Tibial artery (tissue), 4 donors: ENCODE measurements at regions of chr14 and their contacts with region 1.

Region 1: DNA sequence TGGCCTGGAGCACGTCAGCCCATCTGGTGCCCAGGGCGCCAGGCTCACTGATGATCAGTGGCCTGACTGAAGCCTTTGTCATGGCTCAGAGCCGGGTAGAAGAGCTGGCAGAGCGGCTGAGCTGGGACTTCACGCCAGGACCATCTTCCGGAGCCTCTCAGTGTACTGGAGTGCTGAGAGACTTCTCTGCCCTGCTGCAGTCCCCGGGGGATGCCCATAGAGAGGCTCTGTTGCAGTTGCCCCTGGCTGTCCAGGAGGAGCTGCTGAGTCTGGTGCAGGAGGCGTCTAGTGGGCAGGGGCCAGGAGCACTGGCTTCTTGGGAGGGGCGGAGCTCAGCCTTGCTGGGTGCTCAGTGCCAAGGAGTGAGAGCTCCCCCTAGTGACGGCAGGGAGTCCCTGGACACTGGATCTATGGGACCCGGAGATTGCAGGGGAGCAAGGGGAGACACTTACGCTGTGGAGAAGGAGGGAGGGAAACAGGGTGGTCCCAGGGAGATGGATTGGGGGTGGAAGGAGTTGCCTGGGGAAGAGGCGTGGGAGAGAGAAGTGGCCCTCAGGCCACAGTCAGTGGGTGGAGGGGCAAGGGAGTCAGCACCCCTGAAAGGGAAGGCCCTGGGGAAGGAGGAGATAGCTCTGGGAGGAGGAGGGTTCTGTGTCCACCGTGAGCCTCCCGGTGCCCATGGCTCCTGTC is 2.0 kb downstream of the KHNYN start:
- DNase-seq: peak; percentile 89 to 92
- H3K4me3 ChIP-seq: peak overlapping the region; percentile 64 to 81
- H3K27ac ChIP-seq: peak overlapping the region; percentile 94 to 96
- H3K4me1 ChIP-seq: peaks cover 0 to 42% (median 28%) of the 10 kb centered on the region in 4 donors
- H3K27me3 ChIP-seq: no peaks in the 10 kb centered on the region
- CTCF ChIP-seq: peak; percentile 72 to 86

Region 2: DNA sequence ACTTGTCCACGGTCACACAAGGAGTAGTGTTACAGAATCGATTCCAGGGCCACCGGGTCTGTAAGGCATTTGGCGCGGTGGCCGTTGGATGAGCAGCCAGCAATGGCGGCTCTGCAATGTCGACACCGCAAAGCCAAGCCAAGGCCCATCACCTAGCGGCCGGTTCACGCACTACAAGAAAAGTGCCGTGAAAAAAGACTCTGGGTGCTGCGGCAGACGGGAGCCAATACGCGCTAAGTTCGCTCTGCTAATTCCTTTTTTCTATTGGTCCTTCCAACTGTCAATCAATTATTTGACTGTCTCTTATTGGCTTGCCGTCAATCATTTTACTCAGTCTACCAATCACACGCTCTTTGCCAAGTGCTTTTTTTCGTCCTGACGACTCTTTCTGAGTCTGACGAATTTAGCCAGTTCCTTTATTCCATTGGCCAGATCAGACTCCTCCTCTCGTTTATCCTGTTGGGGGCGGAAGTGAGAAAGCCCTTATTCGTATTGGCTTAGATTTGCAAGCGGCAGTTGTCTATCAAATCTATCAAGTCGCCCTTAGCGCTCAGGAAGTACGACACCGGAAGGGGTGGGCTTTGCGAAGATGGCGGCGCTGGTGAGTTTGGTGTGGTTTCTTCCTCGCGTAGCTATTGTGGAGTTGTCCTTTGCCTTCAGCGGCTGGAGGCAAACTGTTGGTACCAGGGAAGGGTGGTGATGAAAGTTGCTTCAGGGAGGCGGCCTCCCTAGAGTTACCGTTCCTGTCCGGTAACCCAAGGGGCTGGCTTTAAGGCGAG is 962.4 kb before region 1 on chr14 and contains the start of gene NGDN:
- intact Hi-C with region 1: loop called (anchors 5 kb)
- DNase-seq: peak; percentile 96
- H3K4me3 ChIP-seq: peak within 1 kb of the TSS; percentile 76 to 79
- H3K27ac ChIP-seq: peak within 1 kb of the TSS; percentile 76 to 83
- H3K4me1 ChIP-seq: peaks cover 0 to 8% (median 4%) of the 10 kb centered on the region in 4 donors
- H3K27me3 ChIP-seq: no peaks in the 10 kb centered on the region
- CTCF ChIP-seq: peak; percentile 72 to 87

Region 3: DNA sequence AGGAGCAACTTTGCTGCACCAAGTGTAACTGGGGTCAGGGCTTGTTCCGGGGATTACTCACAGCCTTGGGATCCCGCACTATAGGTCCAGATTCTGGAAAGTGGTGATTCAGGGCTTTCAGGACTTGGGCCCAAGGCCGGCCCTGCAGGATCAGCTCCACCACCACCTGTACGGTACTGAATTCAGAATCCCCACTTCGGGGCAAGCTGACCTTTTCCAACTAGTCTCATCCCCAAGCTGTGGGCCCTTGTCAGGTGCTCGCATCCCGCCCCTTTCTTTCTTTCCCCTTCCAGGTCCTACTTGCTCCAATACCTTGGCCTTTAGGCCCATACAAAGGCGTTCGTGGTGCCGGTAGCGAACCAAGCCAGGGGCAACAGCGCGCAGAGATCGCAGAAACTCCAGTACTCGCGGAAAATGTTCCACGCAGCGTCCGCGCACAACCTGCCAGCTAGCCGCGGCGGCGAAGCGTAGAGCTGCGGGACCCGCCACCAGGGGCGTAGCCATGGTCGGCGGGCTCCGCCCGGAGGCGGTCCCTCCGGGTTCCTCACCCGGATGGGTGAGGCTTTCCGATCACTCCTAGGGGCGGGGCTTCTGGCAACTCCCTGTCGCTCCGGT is 189.8 kb before region 1 on chr14:
- intact Hi-C with region 1: loop called (anchors 10 kb)
- DNase-seq: peak; percentile 73 to 90
- H3K4me3 ChIP-seq: peak overlapping the region; percentile 68 to 90
- H3K27ac ChIP-seq: peak overlapping the region; percentile 92 to 93
- H3K4me1 ChIP-seq: peaks cover 0 to 45% (median 33%) of the 10 kb centered on the region in 4 donors
- H3K27me3 ChIP-seq: no peaks in the 10 kb centered on the region
- CTCF ChIP-seq: peak; percentile 54 to 66

Region 4: DNA sequence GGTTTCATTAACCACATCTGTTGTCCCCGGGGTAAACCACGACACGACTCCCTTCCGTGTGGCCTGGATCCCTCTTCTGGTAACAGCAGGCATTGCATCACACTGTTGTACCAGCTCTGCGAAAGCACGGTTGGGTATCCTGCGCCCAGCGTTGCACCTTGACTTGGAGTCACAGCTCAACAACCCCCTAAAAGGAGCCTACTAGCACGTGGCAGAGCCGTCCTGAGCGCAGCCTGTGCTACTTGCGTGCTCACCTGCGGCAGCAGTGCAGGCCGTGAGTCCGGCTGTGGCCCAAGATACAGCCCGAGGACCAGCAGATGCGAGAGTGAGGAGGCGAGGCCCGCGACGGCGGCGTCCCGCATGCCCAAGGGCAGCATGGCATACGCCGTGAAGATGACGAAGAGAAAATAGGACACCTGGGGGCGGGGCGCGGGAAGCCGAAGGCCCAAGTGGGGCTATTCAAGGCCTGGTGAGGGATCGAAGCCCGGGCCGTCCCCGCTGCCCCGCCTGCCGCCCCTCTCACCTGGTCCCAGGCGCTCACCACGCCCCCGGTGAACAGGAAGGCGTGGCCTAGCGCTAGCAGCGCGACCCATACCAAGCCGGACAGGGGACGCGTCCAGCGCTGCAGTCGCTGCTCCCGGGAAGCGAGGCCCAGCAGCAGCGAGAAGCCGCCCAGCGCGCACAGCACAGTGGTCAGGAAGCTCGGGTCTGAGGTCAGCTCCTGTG is 99.3 kb before region 1 on chr14:
- intact Hi-C with region 1: loop called (anchors 2 kb)
- DNase-seq: peak; percentile 72 to 82
- H3K4me3 ChIP-seq: peak overlapping the region; percentile 12 to 26
- H3K27ac ChIP-seq: no peak overlapping the region
- H3K4me1 ChIP-seq: peaks cover 0 to 35% (median 27%) of the 10 kb centered on the region in 4 donors
- H3K27me3 ChIP-seq: peaks cover 6 to 49% of the 10 kb centered on the region in 2 donors
- CTCF ChIP-seq: peak; percentile 70 to 79

Region 5: GRCh38 chr14:24366721-24367513 is 64.8 kb before region 1 on chr14:
- intact Hi-C with region 1: loop called (anchors 2 kb)
- DNase-seq: peak; percentile 90 to 98
- H3K4me3 ChIP-seq: peak overlapping the region; percentile 74 to 84
- H3K27ac ChIP-seq: peak overlapping the region; percentile 97 to 98
- H3K4me1 ChIP-seq: peaks cover 0 to 32% (median 20%) of the 10 kb centered on the region in 4 donors
- H3K27me3 ChIP-seq: no peaks in the 10 kb centered on the region
- CTCF ChIP-seq: no peak

Region 6: DNA sequence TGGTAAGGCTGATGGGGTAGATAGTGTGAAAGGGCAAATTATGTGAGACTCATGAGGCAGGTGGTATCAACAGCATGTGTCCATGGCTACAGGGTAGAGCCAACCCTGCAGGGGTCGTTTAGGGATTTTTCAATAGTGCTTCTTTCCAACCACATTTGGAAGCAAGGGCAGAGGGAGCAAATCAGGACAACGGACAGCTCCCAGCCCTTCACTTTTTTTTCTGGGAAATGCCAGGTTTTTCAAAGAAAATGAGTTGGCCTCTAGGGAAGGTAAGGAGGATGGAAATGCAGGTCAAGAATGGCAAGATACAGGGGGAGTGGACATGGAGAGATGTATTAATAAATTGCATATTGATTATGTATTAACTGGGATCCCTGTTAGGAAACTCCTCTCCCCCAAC is 81.3 kb after region 1 on chr14:
- intact Hi-C with region 1: no loop called
- DNase-seq: no peak
- H3K4me3 ChIP-seq: no peak overlapping the region
- H3K27ac ChIP-seq: no peak overlapping the region
- H3K4me1 ChIP-seq: no peaks in the 10 kb centered on the region
- H3K27me3 ChIP-seq: no peaks in the 10 kb centered on the region
- CTCF ChIP-seq: no peak